Head of caudate nucleus (tissue), 42 donors: ENCODE measurements at regions of chr10 and their contacts with region 1.

Region 1: GRCh38 chr10:101095542-101096213 is 33.9 kb downstream of the KAZALD1 start:
- DNase-seq: peak; percentile 25 to 84 (median 56)

Region 2: DNA sequence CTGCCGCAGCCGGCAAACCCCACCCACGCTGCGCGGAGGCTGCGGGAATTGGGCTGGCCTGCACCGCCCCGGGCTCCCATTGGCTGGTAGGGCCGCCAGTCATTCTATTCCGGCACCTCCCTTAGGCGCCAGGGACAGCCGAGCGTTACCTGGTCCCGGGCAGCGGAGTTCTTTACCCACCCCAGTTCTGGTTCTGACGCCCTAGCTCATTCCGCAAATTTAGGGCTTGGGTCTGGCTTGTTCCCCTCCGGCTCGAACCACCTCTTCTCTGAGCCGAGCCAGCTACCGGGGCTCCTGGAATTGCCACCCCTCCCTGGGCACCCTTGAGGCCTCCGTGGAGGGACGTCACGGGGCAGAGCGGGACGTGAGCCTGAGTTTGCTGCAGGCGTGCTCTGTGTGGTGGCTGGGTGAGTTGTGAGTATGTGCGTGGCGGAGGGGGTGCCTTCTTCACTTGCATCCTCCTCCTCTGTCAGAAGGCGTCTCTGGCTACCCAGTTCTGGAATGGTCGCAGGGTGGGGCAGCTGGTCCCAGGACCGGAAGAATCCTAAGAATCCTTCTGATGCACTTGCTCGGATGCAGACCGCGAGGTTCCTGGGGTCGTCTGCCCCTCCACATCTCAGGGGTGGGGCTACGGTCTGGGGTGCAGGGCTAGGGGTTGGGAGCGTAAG is 64.4 kb before region 1 on chr10 and contains the starts of genes PDZD7 and SFXN3:
- intact Hi-C with region 1: no loop called
- DNase-seq: peak; percentile 96 to 100 (median 99)

Region 3: GRCh38 chr10:101141616-101142532 is 46.2 kb after region 1 on chr10:
- intact Hi-C with region 1: loop called (anchors 5 kb)
- DNase-seq: peak; percentile 66 to 90 (median 83)